Esophagus squamous epithelium (tissue), 5 donors: ENCODE measurements at regions of chr15 and their contacts with region 1.

Region 1: DNA sequence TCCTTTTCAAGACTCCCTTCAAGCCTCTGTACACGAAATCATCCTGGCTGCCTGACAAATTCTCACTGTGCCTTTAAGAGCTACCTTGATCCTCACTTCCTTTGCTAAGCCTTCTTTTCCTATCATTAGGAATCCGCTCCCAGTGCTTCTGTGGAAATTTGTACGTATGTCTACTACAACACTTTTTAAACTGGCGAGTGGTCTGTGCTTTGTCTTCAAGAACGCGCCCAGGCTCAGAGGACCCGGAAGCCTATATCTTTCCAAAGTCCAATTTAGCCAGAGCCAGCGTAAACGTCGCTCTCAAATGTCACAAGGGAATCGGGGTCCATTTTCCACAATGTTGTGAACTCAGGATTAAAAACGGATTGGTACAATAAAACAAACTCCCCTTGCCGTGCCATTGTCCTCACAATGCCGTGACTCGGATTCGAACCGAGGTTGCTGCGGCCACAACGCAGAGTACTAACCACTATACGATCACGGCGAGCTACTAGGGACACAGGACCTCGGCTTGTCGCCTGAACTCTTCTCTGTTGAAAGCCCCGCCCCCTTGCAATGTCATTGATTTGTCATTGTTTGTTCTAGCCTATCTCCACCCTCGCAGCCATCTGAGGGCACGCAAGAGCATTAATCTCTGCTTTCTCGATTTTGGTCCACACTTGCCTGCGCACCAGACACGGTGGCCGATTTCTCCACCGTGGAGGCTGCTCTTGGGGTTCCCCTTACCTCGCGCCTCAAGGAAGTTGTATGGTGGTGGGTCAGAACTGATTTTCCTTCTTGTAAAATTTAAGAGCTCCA is 12.4 kb upstream of the SHF start:
- DNase-seq: peak; percentile 85
- H3K4me3 ChIP-seq: peak overlapping the region; percentile 36 to 87 (median 68)
- H3K27ac ChIP-seq: peak overlapping the region; percentile 85 to 100 (median 98)
- H3K4me1 ChIP-seq: peaks cover 0 to 37% (median 6%) of the 10 kb centered on the region in 3 donors
- H3K27me3 ChIP-seq: no peaks in the 10 kb centered on the region
- CTCF ChIP-seq: peak in 1 of 6 experiments; percentile 24
- POLR2A ChIP-seq: peak in 3 of 4 donors; percentile 51 to 94 (median 91)

Region 2: GRCh38 chr15:45399381-45400212 is 199.4 kb after region 1 on chr15:
- intact Hi-C with region 1: loop called (anchors 10 kb)
- DNase-seq: no peak
- H3K4me3 ChIP-seq: no peak overlapping the region
- H3K27ac ChIP-seq: no peak overlapping the region
- H3K4me1 ChIP-seq: peaks cover 7 to 26% (median 11%) of the 10 kb centered on the region in 3 donors
- H3K27me3 ChIP-seq: peaks cover 0 to 17% (median 0%) of the 10 kb centered on the region in 4 donors
- CTCF ChIP-seq: peak; percentile 52 to 77 (median 74)
- POLR2A ChIP-seq: no peak